PC-9 (cell line): ENCODE measurements at regions of chr15 and their contacts with region 1.

Region 1: GRCh38 chr15:97903971-97904572 is 56.4 kb upstream of the ARRDC4 start:
- DNase-seq: peak; percentile 37 to 56
- H3K4me3 ChIP-seq: no peak overlapping the region
- H3K27ac ChIP-seq: no peak overlapping the region
- H3K4me1 ChIP-seq: no peaks in the 10 kb centered on the region
- H3K27me3 ChIP-seq: peaks cover 63% of the 10 kb centered on the region
- CTCF ChIP-seq: peak; percentile 63

Region 2: GRCh38 chr15:97929456-97929855 is 25.4 kb after region 1 on chr15:
- CTCF ChIA-PET with region 1: no interaction called
- POLR2A ChIA-PET with region 1: no interaction called
- intact Hi-C with region 1: no loop called
- DNase-seq: no peak
- H3K4me3 ChIP-seq: no peak overlapping the region
- H3K27ac ChIP-seq: peak overlapping the region; percentile 52
- H3K4me1 ChIP-seq: peaks cover 25% of the 10 kb centered on the region
- H3K27me3 ChIP-seq: no peaks in the 10 kb centered on the region
- CTCF ChIP-seq: no peak

Region 3: GRCh38 chr15:98177924-98178592 is 274.0 kb after region 1 on chr15:
- CTCF ChIA-PET with region 1: no interaction called
- POLR2A ChIA-PET with region 1: no interaction called
- intact Hi-C with region 1: loop called (anchors 1 kb)
- DNase-seq: peak; percentile 20 to 55
- H3K4me3 ChIP-seq: no peak overlapping the region
- H3K27ac ChIP-seq: no peak overlapping the region
- H3K4me1 ChIP-seq: no peaks in the 10 kb centered on the region
- H3K27me3 ChIP-seq: peaks cover 24% of the 10 kb centered on the region
- CTCF ChIP-seq: peak; percentile 66